Prostate gland (tissue), 2 donors: ENCODE measurements at regions of chrX and their contacts with region 1.

Region 1: GRCh38 chrX:119617517-119618164 is 11.4 kb upstream of the NKRF start:
- DNase-seq: no peak
- H3K4me3 ChIP-seq: no peak overlapping the region
- H3K27ac ChIP-seq: no peak overlapping the region
- H3K4me1 ChIP-seq: no peaks in the 10 kb centered on the region
- H3K27me3 ChIP-seq: no peaks in the 10 kb centered on the region
- CTCF ChIP-seq: no peak
- POLR2A ChIP-seq: no peak

Region 2: GRCh38 chrX:118566359-118566758 is 1051.3 kb before region 1 on chrX:
- intact Hi-C with region 1: no loop called
- DNase-seq: no peak
- H3K4me3 ChIP-seq: no peak overlapping the region
- H3K27ac ChIP-seq: no peak overlapping the region
- H3K4me1 ChIP-seq: no peaks in the 10 kb centered on the region
- H3K27me3 ChIP-seq: no peaks in the 10 kb centered on the region
- CTCF ChIP-seq: no peak
- POLR2A ChIP-seq: no peak

Region 3: DNA sequence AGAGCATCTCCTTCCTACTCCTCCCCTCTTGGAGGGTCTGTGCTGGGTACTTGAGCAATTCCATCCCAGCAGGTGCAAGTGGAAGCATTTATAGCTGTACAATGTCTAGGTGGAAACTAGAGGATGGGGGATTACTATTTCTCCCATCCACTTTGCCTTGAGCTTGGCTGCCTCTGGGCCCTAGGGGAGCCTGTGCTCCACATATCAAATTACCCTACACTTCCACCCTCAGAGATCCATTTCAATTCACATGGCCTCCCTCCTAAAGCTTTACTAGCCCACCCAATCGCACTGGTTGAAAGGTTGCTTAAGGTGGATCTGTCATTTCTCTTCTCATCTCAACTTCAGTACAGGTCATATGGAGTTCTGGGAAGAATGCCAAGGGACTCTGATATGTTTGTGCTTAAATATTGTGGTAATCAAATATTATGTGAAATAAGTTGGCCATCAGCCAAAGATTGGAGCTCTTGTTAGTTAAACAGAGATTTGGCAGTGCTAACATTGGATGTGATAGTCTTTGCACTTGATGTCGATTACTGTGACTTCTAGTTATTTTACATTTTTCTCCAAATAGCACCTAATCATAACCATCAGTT is 54.7 kb after region 1 on chrX:
- intact Hi-C with region 1: no loop called
- DNase-seq: no peak
- H3K4me3 ChIP-seq: no peak overlapping the region
- H3K27ac ChIP-seq: no peak overlapping the region
- H3K4me1 ChIP-seq: no peaks in the 10 kb centered on the region
- H3K27me3 ChIP-seq: no peaks in the 10 kb centered on the region
- CTCF ChIP-seq: no peak
- POLR2A ChIP-seq: no peak

Region 4: DNA sequence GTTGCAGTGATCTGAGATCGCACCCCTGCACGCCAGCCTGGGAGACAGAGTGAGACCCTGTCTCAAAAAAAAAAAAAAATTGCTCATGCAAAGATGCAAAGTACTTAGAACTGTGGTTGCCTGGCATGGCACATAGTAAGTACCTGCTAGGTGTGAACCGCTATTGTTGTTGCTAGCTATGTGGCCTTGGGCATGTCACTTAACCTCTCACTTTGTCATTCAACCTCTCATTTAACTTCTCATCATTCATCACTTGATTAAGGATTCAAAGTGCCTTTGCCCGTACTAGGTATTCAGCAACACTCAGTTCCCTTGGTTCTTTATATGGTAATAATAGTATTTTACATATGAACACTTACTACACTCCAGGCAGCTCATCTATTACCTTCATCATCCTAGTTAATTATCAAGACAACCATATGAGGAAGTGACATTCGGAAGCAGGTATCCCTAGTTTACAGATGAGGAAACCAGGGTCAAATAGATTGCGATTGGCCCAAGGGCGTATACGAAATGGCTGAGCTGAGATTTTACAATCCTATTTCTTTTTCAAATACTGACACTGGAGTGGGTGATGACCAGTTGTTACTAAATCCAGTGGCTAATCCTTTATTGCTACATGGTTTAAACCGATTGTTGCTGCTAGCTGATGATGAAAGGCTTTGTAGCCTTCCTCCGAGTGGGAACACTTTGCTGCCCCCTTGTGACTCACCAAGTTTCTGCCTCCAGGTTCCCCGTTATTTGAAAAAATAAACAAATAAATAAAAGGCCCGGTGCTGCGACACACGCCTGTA is 112.0 kb after region 1 on chrX:
- intact Hi-C with region 1: loop called (anchors 10 kb)
- DNase-seq: peak; percentile 24
- H3K4me3 ChIP-seq: no peak overlapping the region
- H3K27ac ChIP-seq: no peak overlapping the region
- H3K4me1 ChIP-seq: no peaks in the 10 kb centered on the region
- H3K27me3 ChIP-seq: no peaks in the 10 kb centered on the region
- CTCF ChIP-seq: peak in 3 of 4 experiments; percentile 47 to 51 (median 47)
- POLR2A ChIP-seq: no peak